GM18951 (cell line): ENCODE measurements at regions of chr3 and their contacts with region 1.

Region 1: GRCh38 chr3:195956571-195956970 is 48.2 kb upstream of the TNK2 start:
- POLR2A ChIP-seq: no peak

Region 2: GRCh38 chr3:195692354-195692685 is 264.3 kb before region 1 on chr3:
- in situ Hi-C with region 1: loop called (anchors 5 kb)
- POLR2A ChIP-seq: no peak

Region 3: GRCh38 chr3:196489747-196490146 is 533.2 kb after region 1 on chr3:
- in situ Hi-C with region 1: no loop called
- POLR2A ChIP-seq: no peak